ENCODE measurements at regions of chr5 and their contacts with region 1.

Region 1: GRCh38 chr5:96934708-96935558 is 947 bp upstream of the LNPEP start:
- DNase-seq: peak; percentile 85 to 94 (median 86)
- ATAC-seq: peak; percentile 85
- H3K4me3 ChIP-seq: peak overlapping the region; percentile 75
- H3K27ac ChIP-seq: peak overlapping the region; percentile 85
- H3K4me1 ChIP-seq: peaks cover 40 to 43% of the 10 kb centered on the region in 2 experiments
- H3K27me3 ChIP-seq: no peaks in the 10 kb centered on the region
- CTCF ChIP-seq: no peak; a peak in 1 of 6 replicates
- EP300 ChIP-seq: 0 out of 2 replicates have a peak, but pooled peaks have one; percentile 31
- POLR2A ChIP-seq: peak; percentile 90
- RAD21 ChIP-seq: no peak; a peak in 1 of 4 replicates

Region 2: DNA sequence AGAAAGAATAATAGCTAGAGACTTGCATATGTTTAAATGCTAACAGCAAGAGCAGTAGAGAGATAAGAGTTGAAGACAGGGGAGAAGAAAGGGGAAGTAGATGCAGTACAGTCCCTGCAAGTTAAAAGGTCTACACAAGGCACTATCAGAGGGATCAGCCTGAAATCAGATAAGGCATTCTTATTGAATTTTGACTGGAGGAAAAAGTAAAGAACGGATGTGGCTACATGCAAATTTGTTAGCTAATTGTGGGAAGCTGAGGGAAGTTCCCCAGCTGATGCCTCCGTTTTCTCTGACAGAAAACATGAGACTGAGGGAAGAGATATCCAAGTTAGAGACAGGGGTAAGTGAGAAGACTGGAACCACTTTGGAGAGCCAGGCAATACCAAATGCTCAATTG is 1216.7 kb before region 1 on chr5:
- CTCF ChIA-PET with region 1: no interaction called
- POLR2A ChIA-PET with region 1: no interaction called
- in situ Hi-C with region 1: no loop called
- intact Hi-C with region 1: loop called (anchors 10 kb)
- DNase-seq: peak in 2 of 4 experiments; percentile 53 to 67
- ATAC-seq: peak; percentile 77
- H3K4me3 ChIP-seq: no peak overlapping the region
- H3K27ac ChIP-seq: peak overlapping the region; percentile 27; the same call in 2 of the 3 replicates
- H3K4me1 ChIP-seq: peaks cover 23 to 65% of the 10 kb centered on the region in 2 experiments
- H3K27me3 ChIP-seq: no peaks in the 10 kb centered on the region
- CTCF ChIP-seq: no peak; a peak in 1 of 6 replicates
- EP300 ChIP-seq: peak; percentile 74
- POLR2A ChIP-seq: no peak
- RAD21 ChIP-seq: peak; percentile 25 to 33; a peak in 1 of 4 replicates

Region 3: DNA sequence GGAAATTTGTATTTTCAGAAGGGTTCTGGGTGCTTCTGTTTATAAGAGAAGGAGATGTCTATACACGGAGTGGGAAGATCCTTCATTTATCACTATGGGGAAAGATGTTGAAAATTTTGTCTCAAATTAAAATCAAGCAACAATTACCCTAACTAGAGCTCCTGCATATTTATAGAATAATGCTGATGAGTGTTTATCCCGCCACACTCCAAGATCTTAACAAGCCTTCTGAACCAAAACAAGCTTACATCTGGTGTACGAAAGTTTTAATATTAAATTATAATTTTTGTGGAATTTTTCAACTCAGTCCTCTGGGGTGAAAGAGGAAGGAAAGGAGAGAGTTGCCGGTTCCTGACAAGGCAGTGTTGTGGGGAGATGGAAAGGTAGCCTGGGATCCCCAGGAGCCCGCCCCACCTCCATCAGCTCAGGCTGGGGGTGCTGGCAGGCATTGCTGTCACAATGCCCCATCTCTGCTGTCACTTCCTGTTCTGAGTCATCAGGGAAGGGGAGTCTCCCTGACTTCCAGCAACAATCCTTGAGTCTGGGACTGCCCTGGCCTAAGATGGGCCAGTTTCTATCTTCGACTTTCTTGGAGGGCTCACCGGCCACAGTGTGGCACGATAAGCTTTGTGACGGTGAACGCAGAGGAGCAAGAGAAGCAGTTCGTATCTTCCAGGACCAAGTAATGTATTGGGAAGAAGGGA is 191.7 kb before region 1 on chr5:
- CTCF ChIA-PET with region 1: no interaction called
- POLR2A ChIA-PET with region 1: no interaction called
- in situ Hi-C with region 1: no loop called
- intact Hi-C with region 1: loop called (anchors 1 kb)
- DNase-seq: peak; percentile 55 to 80 (median 60)
- ATAC-seq: peak; percentile 69
- H3K4me3 ChIP-seq: peak overlapping the region; percentile 28; the same call in 1 of the 2 replicates
- H3K27ac ChIP-seq: peak overlapping the region; percentile 85
- H3K4me1 ChIP-seq: peaks cover 10 to 44% of the 10 kb centered on the region in 2 experiments
- H3K27me3 ChIP-seq: no peaks in the 10 kb centered on the region
- CTCF ChIP-seq: no peak; a peak in 1 of 6 replicates
- EP300 ChIP-seq: no peak
- POLR2A ChIP-seq: no peak; the same call in 1 of the 2 replicates
- RAD21 ChIP-seq: no peak

Region 4: GRCh38 chr5:96807075-96807654 is 127.8 kb before region 1 on chr5:
- CTCF ChIA-PET with region 1: no interaction called
- POLR2A ChIA-PET with region 1: no interaction called
- in situ Hi-C with region 1: no loop called
- intact Hi-C with region 1: loop called (anchors 5 kb)
- DNase-seq: peak; percentile 70 to 77 (median 72)
- ATAC-seq: peak; percentile 70
- H3K4me3 ChIP-seq: peak overlapping the region; percentile 73
- H3K27ac ChIP-seq: peak overlapping the region; percentile 96
- H3K4me1 ChIP-seq: peaks cover 5 to 14% of the 10 kb centered on the region in 2 experiments; a peak in 4 of 5 replicates
- H3K27me3 ChIP-seq: no peaks in the 10 kb centered on the region
- CTCF ChIP-seq: no peak
- EP300 ChIP-seq: no peak
- POLR2A ChIP-seq: no peak
- RAD21 ChIP-seq: no peak

Region 5: DNA sequence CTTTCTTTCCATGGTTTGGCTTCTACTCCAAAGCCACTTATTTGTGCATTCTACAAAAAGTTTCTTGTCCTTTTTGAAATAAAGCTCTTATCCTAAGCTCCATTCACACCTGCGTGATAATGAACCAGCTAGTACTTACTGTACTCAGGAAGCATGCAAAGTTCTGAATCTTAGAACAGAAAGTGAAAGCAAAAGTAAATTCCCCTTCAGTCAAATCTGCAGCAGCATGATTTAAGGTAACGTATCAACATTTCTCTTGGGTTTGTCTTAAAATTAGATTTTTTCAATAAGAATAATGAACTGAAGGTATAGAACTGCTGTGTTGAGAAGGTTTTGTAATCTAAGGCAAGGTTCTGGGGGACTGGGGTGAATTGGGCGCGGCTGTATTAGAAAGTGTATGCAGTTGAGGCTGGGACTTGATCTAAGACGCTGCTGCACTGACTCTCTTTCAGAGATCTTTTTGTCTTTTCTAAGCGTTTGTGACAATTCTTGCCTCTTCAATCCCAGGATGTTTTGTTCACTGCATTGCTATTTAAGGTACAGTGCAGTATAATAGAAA is 58.6 kb before region 1 on chr5 and contains the start of gene ERAP2:
- CTCF ChIA-PET with region 1: no interaction called
- POLR2A ChIA-PET with region 1: interaction called, 3 read pairs
- in situ Hi-C with region 1: no loop called
- intact Hi-C with region 1: loop called (anchors 2 kb)
- DNase-seq: peak; percentile 20 to 56 (median 36)
- ATAC-seq: peak; percentile 72
- H3K4me3 ChIP-seq: peak within 1 kb of the TSS; percentile 52
- H3K27ac ChIP-seq: peak within 1 kb of the TSS; percentile 80
- H3K4me1 ChIP-seq: peaks cover 0 to 22% of the 10 kb centered on the region in 2 experiments; a peak in 3 of 5 replicates
- H3K27me3 ChIP-seq: no peaks in the 10 kb centered on the region
- CTCF ChIP-seq: no peak
- EP300 ChIP-seq: no peak
- POLR2A ChIP-seq: no peak; the same call in 1 of the 2 replicates
- RAD21 ChIP-seq: 0 out of 4 replicates have a peak, but pooled peaks of 1 of the 2 experiments have one; percentile 6
- polyA plus RNA-seq, gene ERAP2: 0.93 to 1.2 TPM

Region 6: DNA sequence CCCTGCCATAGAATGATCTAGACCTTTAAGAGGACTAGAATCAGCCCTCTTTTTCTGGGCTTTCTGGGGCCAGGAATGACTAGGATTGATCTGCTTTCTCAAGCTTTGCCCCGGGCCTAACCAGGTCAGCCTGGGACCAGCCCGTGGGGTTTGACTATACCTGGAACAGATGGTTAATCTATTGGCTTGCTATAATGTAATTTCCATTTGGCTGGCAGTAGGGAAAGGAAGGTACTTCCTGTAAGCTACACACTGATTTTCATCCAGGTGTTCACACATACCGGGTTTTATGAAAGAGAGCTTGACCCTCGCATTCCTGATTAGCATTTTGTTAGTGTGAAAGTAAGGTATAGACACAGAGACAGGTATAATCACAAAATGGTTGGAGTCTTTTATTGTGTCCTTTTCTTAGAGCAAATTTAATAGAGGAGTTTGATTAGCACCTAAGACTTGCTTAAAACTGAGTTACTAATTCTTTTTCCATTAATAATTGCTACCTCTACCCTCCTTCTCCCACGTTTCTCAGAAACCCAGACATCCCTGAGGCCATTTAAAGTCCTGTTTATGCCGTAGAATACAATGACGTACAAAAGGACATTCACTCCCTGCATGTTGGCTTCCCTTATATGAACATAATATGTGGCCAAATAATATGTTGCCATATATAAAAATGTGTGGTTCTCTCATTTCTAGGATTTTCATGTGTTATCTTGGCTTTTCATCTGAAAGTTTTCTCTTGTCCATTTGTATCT is 18.2 kb after region 1 on chr5:
- CTCF ChIA-PET with region 1: no interaction called
- POLR2A ChIA-PET with region 1: no interaction called
- in situ Hi-C with region 1: no loop called
- intact Hi-C with region 1: no loop called
- DNase-seq: no peak
- ATAC-seq: peak; percentile 39; the same call in 2 of the 3 replicates
- H3K4me3 ChIP-seq: no peak overlapping the region
- H3K27ac ChIP-seq: no peak overlapping the region
- H3K4me1 ChIP-seq: peaks cover 0 to 5% of the 10 kb centered on the region in 2 experiments; a peak in 2 of 5 replicates
- H3K27me3 ChIP-seq: no peaks in the 10 kb centered on the region
- CTCF ChIP-seq: no peak
- EP300 ChIP-seq: no peak
- POLR2A ChIP-seq: no peak
- RAD21 ChIP-seq: no peak

Measured in K562 (cell line).